ENCODE measurements at regions of chr10 and their contacts with region 1.

Region 1: GRCh38 chr10:114470956-114471905 is 66.9 kb upstream of the AFAP1L2 start:
- DNase-seq: peak; percentile 76
- H3K4me3 ChIP-seq: no peak overlapping the region; a peak in 1 of 4 replicates
- H3K27ac ChIP-seq: no peak overlapping the region
- H3K4me1 ChIP-seq: no peaks in the 10 kb centered on the region
- H3K27me3 ChIP-seq: no peaks in the 10 kb centered on the region
- CTCF ChIP-seq: peak; percentile 84
- EP300 ChIP-seq: no peak
- RAD21 ChIP-seq: peak; percentile 91

Region 2: DNA sequence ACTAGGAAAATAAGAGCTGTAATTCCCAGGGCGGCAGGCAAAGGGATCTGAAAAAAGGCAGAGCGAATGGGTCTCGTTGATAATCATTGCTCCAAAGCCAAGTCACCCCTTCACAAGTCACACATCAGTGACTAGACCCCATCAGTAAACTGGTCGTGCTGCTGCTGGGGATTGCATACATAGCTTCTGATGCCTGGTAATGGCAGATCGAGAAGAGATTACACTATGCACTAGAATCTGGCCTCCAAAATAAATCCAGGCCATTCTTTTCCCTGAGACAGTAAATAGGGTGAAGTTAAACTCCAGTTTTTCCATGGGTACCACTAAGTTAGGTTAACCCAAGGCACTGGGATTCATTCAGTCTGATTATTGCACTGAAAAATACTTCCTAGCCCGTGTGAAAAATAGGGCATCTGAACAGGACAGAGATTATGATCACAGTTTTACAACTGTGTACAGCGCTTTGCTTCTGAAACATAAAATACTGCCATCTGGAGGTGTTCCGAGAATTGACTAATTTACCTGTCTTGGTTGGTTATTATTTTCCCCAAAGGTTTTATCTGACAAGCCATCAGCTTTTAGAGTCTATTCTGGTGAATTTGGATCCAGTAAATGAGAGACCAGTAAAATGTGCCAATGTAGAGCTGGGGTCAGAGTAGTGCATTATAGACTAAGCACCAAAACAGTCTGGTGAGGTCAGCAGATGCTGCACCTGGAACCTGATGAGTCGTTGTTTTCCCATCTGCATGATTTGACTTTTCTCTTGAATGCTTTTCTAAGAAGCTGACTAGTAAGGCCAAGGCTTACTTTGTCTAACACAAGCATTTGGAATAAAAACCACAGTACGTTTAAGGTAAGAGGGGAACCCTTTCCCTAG is 15.9 kb after region 1 on chr10:
- CTCF ChIA-PET with region 1: interaction called, 42 read pairs
- POLR2A ChIA-PET with region 1: no interaction called
- DNase-seq: peak; percentile 37
- H3K4me3 ChIP-seq: no peak overlapping the region
- H3K27ac ChIP-seq: peak overlapping the region; percentile 50 to 80; a peak in 3 of 4 replicates
- H3K4me1 ChIP-seq: peaks cover 21 to 39% of the 10 kb centered on the region in 2 experiments; a peak in 3 of 4 replicates
- H3K27me3 ChIP-seq: no peaks in the 10 kb centered on the region
- CTCF ChIP-seq: peak; percentile 34
- EP300 ChIP-seq: peak in 1 of 2 experiments; percentile 4; a peak in 2 of 4 replicates
- RAD21 ChIP-seq: peak; percentile 46

Region 3: DNA sequence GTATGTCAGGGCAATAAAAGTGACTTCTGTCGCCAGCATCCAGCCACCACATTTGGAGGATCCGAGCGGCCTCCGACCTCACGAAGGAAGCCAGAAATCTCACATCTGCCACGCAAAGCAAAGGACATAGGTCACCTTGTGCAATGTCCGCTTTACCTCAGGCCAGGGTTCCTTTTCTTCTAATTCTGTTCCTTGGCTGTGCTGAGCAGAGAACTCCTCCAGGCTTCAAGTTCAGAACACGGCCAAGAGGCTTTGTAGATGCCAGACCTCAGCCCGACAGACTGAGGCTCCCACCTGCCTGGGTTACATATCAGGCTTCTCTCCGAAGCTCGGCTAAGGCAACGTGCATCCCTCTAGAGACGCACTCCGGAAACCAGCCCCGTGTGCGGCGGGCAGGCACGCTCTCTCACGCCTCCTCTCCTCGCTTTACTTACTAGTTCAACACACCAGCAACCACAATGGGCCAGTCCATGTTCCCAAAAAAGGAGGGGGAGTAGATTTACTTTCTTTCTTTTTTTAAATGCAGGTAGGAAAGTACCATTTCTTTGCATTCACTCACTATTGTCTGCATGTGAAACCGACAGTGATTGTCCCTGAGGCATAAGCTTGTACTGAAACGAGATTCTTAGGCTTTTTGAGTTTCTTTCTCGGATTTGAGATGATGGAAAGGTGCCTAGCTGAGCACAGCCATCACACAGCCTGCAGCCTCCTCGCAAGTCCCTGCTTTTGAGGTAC is 55.4 kb after region 1 on chr10:
- CTCF ChIA-PET with region 1: interaction called, 13 read pairs
- POLR2A ChIA-PET with region 1: no interaction called
- DNase-seq: peak; percentile 85
- H3K4me3 ChIP-seq: peak overlapping the region; percentile 42 to 53
- H3K27ac ChIP-seq: peak overlapping the region; percentile 7 to 93; a peak in 3 of 4 replicates
- H3K4me1 ChIP-seq: peaks cover 0 to 22% of the 10 kb centered on the region in 2 experiments; a peak in 2 of 4 replicates
- H3K27me3 ChIP-seq: no peaks in the 10 kb centered on the region
- CTCF ChIP-seq: no peak
- EP300 ChIP-seq: no peak
- RAD21 ChIP-seq: 0 out of 2 replicates have a peak, but pooled peaks have one; percentile 14

Region 4: GRCh38 chr10:114541081-114541796 is 70.0 kb after region 1 on chr10:
- CTCF ChIA-PET with region 1: interaction called, 18 read pairs
- POLR2A ChIA-PET with region 1: no interaction called
- DNase-seq: no peak
- H3K4me3 ChIP-seq: no peak overlapping the region
- H3K27ac ChIP-seq: no peak overlapping the region
- H3K4me1 ChIP-seq: no peaks in the 10 kb centered on the region
- H3K27me3 ChIP-seq: no peaks in the 10 kb centered on the region
- CTCF ChIP-seq: no peak
- EP300 ChIP-seq: no peak
- RAD21 ChIP-seq: no peak

Region 5: GRCh38 chr10:114550756-114551635 is 79.8 kb after region 1 on chr10:
- CTCF ChIA-PET with region 1: interaction called, 110 read pairs
- POLR2A ChIA-PET with region 1: no interaction called
- DNase-seq: no peak
- H3K4me3 ChIP-seq: no peak overlapping the region; a peak in 1 of 4 replicates
- H3K27ac ChIP-seq: peak overlapping the region; percentile 11 to 29; a peak in 1 of 4 replicates
- H3K4me1 ChIP-seq: peaks cover 6 to 11% of the 10 kb centered on the region in 2 experiments; a peak in 2 of 4 replicates
- H3K27me3 ChIP-seq: no peaks in the 10 kb centered on the region
- CTCF ChIP-seq: peak; percentile 68
- EP300 ChIP-seq: no peak
- RAD21 ChIP-seq: peak; percentile 63